ENCODE measurements at regions of chr1 and their contacts with region 1.

Region 1: DNA sequence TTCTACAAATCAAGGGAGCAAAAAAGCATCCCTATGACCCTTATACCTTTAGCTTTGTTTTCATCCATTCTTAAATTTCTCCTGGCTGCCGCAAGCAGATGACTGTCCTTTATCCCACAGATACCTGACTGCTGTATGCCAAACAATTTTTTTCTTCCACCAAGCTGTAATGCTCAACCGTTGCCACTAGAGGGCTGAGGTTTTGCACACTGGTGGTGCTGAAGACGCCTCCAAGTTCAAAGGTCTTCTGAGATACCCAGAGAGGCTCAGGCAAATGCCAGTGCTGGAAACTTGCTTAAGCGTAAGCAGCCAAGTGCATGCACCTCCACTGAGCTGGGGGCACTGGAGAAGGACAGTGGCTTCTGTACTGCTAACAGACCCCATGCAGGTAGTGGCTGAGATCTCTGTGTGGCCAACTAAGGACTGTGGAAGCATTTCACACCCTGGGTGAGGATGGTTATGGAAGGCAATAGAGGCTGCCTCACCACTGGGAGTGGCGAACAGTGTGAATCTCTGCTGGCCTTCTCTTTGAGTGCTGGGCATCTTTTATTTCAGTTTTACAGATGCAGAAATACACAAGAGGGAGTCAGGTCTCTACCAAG is 28.5 kb downstream of the CNIH3 start:
- DNase-seq: peak; percentile 83
- H3K4me3 Mint-ChIP-seq: no peak overlapping the region
- H3K27ac Mint-ChIP-seq: no peak overlapping the region
- H3K4me1 Mint-ChIP-seq: no peaks in the 10 kb centered on the region
- H3K27me3 Mint-ChIP-seq: peaks cover 21% of the 10 kb centered on the region
- CTCF ChIP-seq: peak; percentile 97

Region 2: GRCh38 chr1:224607188-224608148 is 37.2 kb before region 1 on chr1:
- CTCF ChIA-PET with region 1: interaction called, 12 read pairs
- POLR2A ChIA-PET with region 1: no interaction called
- intact Hi-C with region 1: no loop called
- DNase-seq: no peak
- H3K4me3 Mint-ChIP-seq: no peak overlapping the region
- H3K27ac Mint-ChIP-seq: no peak overlapping the region
- H3K4me1 Mint-ChIP-seq: no peaks in the 10 kb centered on the region
- H3K27me3 Mint-ChIP-seq: no peaks in the 10 kb centered on the region
- CTCF ChIP-seq: no peak

Region 3: GRCh38 chr1:224632381-224632871 is 12.2 kb before region 1 on chr1:
- CTCF ChIA-PET with region 1: interaction called, 60 read pairs
- POLR2A ChIA-PET with region 1: interaction called, 4 read pairs
- intact Hi-C with region 1: no loop called
- DNase-seq: no peak
- H3K4me3 Mint-ChIP-seq: no peak overlapping the region
- H3K27ac Mint-ChIP-seq: no peak overlapping the region
- H3K4me1 Mint-ChIP-seq: peaks cover 25% of the 10 kb centered on the region
- H3K27me3 Mint-ChIP-seq: no peaks in the 10 kb centered on the region
- CTCF ChIP-seq: no peak

Region 4: DNA sequence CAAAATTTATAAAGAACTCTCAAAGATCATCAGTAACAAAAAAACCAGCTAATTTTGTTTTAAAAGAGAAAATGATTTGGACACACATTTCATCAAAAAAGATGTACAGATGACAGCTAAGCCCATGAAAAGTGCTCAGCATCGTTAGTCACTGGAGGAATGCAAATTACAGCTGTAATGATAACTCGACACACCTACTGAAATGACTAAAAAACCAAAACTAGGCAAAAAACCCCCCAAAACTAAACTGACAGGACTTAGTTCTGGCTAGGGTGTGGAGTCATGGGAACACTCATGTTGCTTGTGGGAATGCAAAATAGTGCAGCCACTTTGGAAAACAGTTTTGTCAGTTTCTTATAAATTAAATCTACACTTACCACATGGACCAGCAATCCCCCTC is 30.9 kb after region 1 on chr1:
- CTCF ChIA-PET with region 1: interaction called, 23 read pairs
- POLR2A ChIA-PET with region 1: no interaction called
- intact Hi-C with region 1: no loop called
- DNase-seq: no peak
- H3K4me3 Mint-ChIP-seq: no peak overlapping the region
- H3K27ac Mint-ChIP-seq: no peak overlapping the region
- H3K4me1 Mint-ChIP-seq: no peaks in the 10 kb centered on the region
- H3K27me3 Mint-ChIP-seq: no peaks in the 10 kb centered on the region
- CTCF ChIP-seq: no peak

Region 5: GRCh38 chr1:224720226-224720625 is 75.6 kb after region 1 on chr1:
- CTCF ChIA-PET with region 1: interaction called, 11 read pairs
- POLR2A ChIA-PET with region 1: no interaction called
- intact Hi-C with region 1: no loop called
- DNase-seq: no peak
- H3K4me3 Mint-ChIP-seq: no peak overlapping the region
- H3K27ac Mint-ChIP-seq: no peak overlapping the region
- H3K4me1 Mint-ChIP-seq: no peaks in the 10 kb centered on the region
- H3K27me3 Mint-ChIP-seq: no peaks in the 10 kb centered on the region
- CTCF ChIP-seq: no peak

Region 6: DNA sequence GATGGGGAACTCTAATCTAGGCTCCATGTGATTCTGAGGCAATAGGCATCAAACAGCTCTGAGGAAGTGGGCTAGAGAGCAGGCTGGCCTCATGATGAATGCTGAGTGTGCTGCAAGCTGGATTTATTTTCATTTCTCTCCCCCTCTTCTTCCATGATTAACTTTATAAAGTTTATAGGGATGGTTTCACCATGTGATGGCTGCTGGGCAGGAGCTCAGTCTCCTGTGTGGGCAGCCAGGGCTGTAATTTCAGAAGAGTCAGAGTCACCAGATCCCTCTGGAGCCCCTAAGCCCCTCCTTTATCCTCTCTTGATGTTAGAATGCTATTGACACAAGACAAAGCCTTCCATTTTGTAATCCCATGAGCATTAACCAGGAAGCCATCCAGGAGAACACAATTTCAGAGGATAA is 115.0 kb after region 1 on chr1:
- CTCF ChIA-PET with region 1: interaction called, 13 read pairs
- POLR2A ChIA-PET with region 1: no interaction called
- intact Hi-C with region 1: no loop called
- DNase-seq: no peak
- H3K4me3 Mint-ChIP-seq: no peak overlapping the region
- H3K27ac Mint-ChIP-seq: no peak overlapping the region
- H3K4me1 Mint-ChIP-seq: no peaks in the 10 kb centered on the region
- H3K27me3 Mint-ChIP-seq: peaks cover 1% of the 10 kb centered on the region
- CTCF ChIP-seq: no peak

Measured in MCF 10A (cell line).